ENCODE measurements at regions of chr10 and their contacts with region 1.

Region 1: GRCh38 chr10:62038609-62039190 is 137.2 kb downstream of the ARID5B start:
- DNase-seq: no peak
- ATAC-seq: peak; percentile 59
- H3K4me3 Mint-ChIP-seq: peak overlapping the region; percentile 69
- H3K27ac Mint-ChIP-seq: peak overlapping the region; percentile 93
- H3K4me1 Mint-ChIP-seq: peaks cover 90% of the 10 kb centered on the region
- H3K27me3 Mint-ChIP-seq: no peaks in the 10 kb centered on the region
- CTCF ChIP-seq: no peak

Region 2: DNA sequence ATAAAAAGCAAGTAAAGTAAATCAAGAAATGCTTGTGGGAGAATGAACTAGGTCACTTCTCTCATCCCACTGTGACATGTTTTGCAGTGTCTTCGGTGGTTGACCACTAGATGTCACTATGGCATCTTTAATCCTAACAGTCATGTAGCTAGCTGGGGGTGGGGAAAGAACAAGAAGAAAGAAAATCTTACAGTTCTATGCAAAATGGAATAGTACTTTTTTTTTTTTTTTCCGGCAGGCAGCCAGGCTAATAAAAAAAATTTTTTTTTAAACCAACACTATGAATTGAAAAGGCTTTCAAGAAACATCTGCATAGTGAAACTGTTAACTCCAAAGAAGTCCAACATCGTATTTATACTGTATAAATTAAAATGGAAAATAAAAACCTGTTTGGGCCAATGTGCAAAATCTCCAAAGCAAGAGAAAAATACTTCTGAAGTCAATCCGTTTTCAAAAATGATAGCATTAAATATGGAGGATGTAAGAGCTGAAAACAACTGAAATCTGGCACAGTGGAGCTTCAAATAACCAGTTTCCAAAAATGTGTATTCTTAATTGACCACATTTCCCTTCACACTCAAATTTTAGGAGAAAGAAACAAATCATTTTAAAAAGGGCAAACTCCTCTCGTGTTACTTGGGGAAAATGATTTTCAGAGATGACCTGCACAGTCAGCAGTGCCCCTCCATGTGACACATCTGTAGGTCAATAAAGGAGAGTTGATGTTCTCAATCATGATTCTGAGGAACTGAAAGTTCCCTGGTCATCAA is 1221.9 kb before region 1 on chr10:
- CTCF ChIA-PET with region 1: no interaction called
- POLR2A ChIA-PET with region 1: no interaction called
- intact Hi-C with region 1: loop called (anchors 2 kb)
- DNase-seq: no peak
- ATAC-seq: peak; percentile 79
- H3K4me3 Mint-ChIP-seq: no peak overlapping the region
- H3K27ac Mint-ChIP-seq: no peak overlapping the region
- H3K4me1 Mint-ChIP-seq: peaks cover 9% of the 10 kb centered on the region
- H3K27me3 Mint-ChIP-seq: no peaks in the 10 kb centered on the region
- CTCF ChIP-seq: peak; percentile 90

Region 3: DNA sequence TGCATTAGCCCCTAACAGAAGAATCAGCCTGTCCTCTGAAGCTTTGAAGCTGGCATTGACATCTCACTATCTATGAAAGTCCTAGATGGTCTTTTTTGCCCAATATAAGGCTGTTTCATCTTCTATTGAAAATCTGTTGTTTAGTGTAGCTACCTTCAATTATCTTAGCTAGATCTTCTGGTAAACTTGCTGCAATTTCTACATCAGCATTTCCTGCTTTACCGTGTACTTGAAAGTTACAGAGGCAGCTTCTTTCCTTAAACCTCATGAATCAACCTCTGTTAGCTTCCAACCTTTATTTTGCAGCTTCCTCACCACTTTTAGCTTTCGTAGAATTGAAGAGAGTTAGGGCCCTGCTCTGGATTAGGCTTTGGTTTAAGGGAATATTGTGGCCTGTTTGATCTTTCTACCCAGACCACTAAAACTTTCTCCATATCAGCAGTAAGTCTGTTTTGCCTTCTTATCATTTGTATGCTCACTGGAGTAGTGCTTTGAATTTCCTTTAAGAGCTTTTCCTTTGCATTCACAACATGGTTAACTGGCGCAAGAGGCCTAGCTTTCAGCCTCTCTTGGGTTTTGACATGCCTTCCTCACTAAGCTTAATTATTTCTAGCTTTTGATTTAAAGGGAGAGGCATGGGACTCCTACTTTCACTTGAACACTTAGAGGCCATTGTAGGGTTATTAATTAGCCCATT is 104.7 kb before region 1 on chr10:
- CTCF ChIA-PET with region 1: no interaction called
- POLR2A ChIA-PET with region 1: no interaction called
- intact Hi-C with region 1: no loop called
- DNase-seq: no peak
- ATAC-seq: no peak
- H3K4me3 Mint-ChIP-seq: no peak overlapping the region
- H3K27ac Mint-ChIP-seq: peak overlapping the region; percentile 79
- H3K4me1 Mint-ChIP-seq: peaks cover 80% of the 10 kb centered on the region
- H3K27me3 Mint-ChIP-seq: no peaks in the 10 kb centered on the region
- CTCF ChIP-seq: no peak

Region 4: GRCh38 chr10:61987951-61988379 is 50.7 kb before region 1 on chr10:
- CTCF ChIA-PET with region 1: interaction called, 12 read pairs
- POLR2A ChIA-PET with region 1: interaction called, 25 read pairs
- intact Hi-C with region 1: no loop called
- DNase-seq: no peak
- ATAC-seq: peak; percentile 90
- H3K4me3 Mint-ChIP-seq: peak overlapping the region; percentile 79
- H3K27ac Mint-ChIP-seq: peak overlapping the region; percentile 97
- H3K4me1 Mint-ChIP-seq: peaks cover 92% of the 10 kb centered on the region
- H3K27me3 Mint-ChIP-seq: no peaks in the 10 kb centered on the region
- CTCF ChIP-seq: no peak

Region 5: GRCh38 chr10:62016623-62017490 is 21.8 kb before region 1 on chr10:
- CTCF ChIA-PET with region 1: interaction called, 33 read pairs
- POLR2A ChIA-PET with region 1: interaction called, 138 read pairs
- intact Hi-C with region 1: loop called (anchors 2 kb)
- DNase-seq: peak; percentile 40
- ATAC-seq: peak; percentile 65
- H3K4me3 Mint-ChIP-seq: peak overlapping the region; percentile 66
- H3K27ac Mint-ChIP-seq: peak overlapping the region; percentile 96
- H3K4me1 Mint-ChIP-seq: peaks cover 84% of the 10 kb centered on the region
- H3K27me3 Mint-ChIP-seq: no peaks in the 10 kb centered on the region
- CTCF ChIP-seq: no peak

Region 6: DNA sequence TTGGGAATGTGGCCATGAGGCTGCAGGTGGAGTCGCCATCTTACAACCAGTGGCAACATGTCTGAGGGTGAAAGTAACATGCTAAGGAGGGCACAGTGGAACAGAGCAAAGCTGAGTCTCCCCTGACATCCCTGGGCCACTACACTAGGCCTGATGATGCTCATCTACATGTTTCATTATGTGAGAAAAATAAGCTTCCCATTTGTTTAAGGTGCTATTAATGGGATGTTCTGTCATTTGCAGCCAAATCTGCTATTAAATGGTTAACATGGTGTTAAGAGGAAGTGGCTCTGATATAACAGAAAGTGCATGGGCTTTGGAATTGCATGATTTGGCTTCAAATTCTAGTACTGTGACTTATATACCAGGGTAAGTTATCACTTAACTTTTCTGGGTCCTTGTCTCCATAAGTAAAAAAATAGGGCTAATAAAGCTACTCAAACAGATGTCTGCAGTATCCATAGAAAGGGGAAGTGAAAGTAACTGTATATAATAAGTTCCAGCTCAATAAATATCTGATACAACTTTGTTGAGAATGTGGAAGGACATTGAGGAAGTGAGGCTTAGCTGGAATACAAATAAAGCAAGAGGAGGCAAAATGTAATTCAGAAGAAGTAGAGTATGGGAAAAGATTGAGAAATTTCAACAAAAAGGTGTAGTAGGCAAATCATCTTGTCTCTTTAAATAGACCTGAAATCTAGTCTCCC is 71.0 kb after region 1 on chr10:
- CTCF ChIA-PET with region 1: interaction called, 7 read pairs
- POLR2A ChIA-PET with region 1: interaction called, 10 read pairs
- intact Hi-C with region 1: no loop called
- DNase-seq: no peak
- ATAC-seq: peak; percentile 72
- H3K4me3 Mint-ChIP-seq: peak overlapping the region; percentile 58
- H3K27ac Mint-ChIP-seq: peak overlapping the region; percentile 87
- H3K4me1 Mint-ChIP-seq: peaks cover 70% of the 10 kb centered on the region
- H3K27me3 Mint-ChIP-seq: no peaks in the 10 kb centered on the region
- CTCF ChIP-seq: no peak

Region 7: DNA sequence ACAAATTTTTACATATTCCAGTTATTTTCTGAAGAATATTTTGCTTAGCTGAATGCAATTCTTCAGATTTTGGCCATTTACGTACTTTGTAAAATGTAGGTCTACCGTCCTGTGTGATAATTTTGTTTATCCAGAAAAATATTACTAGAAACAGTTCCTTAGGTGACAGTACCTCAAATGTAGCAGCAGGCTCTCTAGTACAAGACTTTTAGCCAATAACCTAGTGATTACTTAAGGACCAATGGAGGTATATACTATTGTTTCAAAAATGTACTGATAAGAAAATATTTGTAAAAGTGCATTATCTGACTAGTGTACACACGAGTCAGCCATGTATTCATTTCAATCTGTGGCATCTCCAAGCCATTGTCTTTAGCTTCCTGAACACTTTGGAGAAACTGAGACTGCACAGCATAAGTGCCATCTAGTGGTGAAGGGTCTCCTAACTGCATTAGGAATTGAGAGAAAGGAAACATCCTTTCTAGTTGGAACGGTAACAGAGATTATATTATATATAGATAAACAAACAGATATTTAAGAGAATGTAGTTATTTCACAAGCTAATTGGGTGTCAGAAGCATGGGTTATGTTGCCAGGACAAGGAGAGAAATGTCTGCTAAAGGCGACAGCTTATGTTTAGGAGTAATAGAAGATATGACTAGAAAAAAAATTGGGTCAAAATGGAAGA is 206.2 kb after region 1 on chr10:
- CTCF ChIA-PET with region 1: interaction called, 166 read pairs
- POLR2A ChIA-PET with region 1: interaction called, 52 read pairs
- intact Hi-C with region 1: loop called (anchors 1 kb)
- DNase-seq: no peak
- ATAC-seq: peak; percentile 64
- H3K4me3 Mint-ChIP-seq: peak overlapping the region; percentile 57
- H3K27ac Mint-ChIP-seq: peak overlapping the region; percentile 72
- H3K4me1 Mint-ChIP-seq: peaks cover 45% of the 10 kb centered on the region
- H3K27me3 Mint-ChIP-seq: no peaks in the 10 kb centered on the region
- CTCF ChIP-seq: peak; percentile 74

Region 8: DNA sequence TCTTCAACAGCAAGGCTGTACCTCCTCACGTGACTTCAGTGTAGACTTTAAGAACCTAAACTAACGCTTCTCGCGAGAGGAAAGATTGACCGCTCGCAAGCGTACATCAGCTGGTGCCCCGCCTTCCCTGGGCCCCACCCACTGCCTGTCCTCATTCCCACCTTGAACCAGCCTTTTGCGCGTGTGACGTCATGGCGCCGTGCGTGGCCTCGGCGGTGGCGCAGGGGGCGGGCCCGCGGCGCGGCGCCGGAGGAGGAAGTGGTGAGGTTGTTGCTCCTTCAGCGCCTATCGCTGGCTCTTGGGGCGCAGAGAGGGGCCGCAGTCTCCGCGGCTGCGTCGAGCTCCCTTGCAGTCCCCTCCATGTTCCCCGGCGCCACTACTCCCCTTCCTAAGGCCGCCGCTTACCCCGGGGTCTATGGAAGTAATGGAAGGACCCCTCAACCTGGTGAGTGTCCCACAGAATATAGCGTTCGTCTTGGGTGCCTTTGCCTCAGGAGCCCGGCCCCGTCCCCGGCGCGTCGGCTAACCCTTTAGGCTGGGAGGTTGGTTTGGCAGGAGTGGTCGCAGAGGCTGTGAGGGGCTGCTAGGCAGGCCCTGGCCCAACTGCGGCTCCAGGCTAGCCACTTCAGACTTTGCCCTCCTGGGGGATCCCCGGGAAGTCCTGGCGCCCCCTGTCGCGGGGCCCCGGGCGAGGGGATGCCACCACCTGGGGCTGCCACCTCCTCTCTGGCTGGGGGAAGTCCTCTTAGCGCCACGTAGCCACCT is 1094.5 kb after region 1 on chr10 and contains the start of gene NRBF2:
- CTCF ChIA-PET with region 1: no interaction called
- POLR2A ChIA-PET with region 1: no interaction called
- intact Hi-C with region 1: loop called (anchors 10 kb)
- DNase-seq: peak; percentile 97
- ATAC-seq: peak; percentile 88
- H3K4me3 Mint-ChIP-seq: peak within 1 kb of the TSS; percentile 93
- H3K27ac Mint-ChIP-seq: peak within 1 kb of the TSS; percentile 92
- H3K4me1 Mint-ChIP-seq: peaks cover 44% of the 10 kb centered on the region
- H3K27me3 Mint-ChIP-seq: no peaks in the 10 kb centered on the region
- CTCF ChIP-seq: no peak
- total RNA-seq, gene NRBF2: 23.8 and 26.9 TPM in 2 replicates